Activated CD8-positive, alpha-beta T cell treated with anti-CD3 and anti-CD28 coated beads for 36 hours (primary cell): ENCODE measurements at regions of chr3 and their contacts with region 1.

Region 1: GRCh38 chr3:127544192-127544802 is 46.2 kb downstream of the TPRA1 start:
- DNase-seq: peak; percentile 83
- ATAC-seq: peak; percentile 45
- H3K4me3 Mint-ChIP-seq: no peak overlapping the region
- H3K27ac Mint-ChIP-seq: no peak overlapping the region
- H3K4me1 Mint-ChIP-seq: peaks cover 5% of the 10 kb centered on the region
- H3K27me3 Mint-ChIP-seq: no peaks in the 10 kb centered on the region
- CTCF ChIP-seq: peak; percentile 81

Region 2: DNA sequence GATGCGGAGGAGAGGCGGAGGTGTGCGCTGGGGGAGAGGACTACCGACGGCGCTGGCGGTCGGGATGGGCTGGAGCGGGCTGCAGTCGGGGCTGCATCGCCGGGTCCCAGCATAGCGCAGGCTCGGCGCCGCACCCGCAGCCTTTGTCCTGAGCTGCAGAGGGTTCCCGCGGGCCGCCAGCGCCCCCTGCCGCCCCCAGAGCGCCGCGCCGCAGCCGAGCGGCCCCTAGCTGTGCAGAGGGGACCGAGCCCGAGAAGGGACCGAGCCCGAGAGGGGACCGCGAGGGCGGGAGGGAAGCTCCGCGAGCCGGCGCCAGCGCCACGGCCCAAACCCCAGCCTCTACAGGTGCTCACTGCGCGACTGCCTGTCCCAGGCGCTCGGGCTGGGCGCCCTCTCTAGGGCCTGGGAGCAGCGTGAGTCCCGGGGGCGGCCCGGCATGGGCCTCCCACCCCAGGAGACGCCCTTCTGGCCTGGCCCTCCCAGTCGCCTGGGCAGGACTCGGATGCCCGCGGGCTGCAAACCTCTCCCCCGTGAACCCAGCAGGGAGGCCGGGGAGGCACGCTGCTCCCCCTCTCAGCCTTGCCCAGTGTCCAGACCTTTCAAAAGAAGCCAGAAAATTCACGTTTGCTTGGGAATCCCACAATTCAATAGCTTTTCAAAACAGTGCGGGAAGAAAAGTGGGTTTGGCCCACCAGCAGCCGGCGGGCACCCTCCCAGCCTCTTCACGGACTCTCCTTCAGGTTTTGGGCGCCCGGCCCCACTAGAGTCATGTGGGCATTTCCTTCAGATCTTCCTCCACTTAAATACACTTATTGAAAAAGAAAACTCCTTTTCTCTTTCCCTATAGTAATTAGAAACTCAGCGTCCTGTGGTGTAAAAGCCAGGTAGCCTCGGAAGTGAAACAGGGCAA is 88.5 kb before region 1 on chr3:
- CTCF ChIA-PET with region 1: interaction called, 12 read pairs
- POLR2A ChIA-PET with region 1: no interaction called
- intact Hi-C with region 1: no loop called
- DNase-seq: peak; percentile 76
- ATAC-seq: peak; percentile 96
- H3K4me3 Mint-ChIP-seq: no peak overlapping the region
- H3K27ac Mint-ChIP-seq: no peak overlapping the region
- H3K4me1 Mint-ChIP-seq: peaks cover 10% of the 10 kb centered on the region
- H3K27me3 Mint-ChIP-seq: peaks cover 46% of the 10 kb centered on the region
- CTCF ChIP-seq: peak; percentile 96

Region 3: DNA sequence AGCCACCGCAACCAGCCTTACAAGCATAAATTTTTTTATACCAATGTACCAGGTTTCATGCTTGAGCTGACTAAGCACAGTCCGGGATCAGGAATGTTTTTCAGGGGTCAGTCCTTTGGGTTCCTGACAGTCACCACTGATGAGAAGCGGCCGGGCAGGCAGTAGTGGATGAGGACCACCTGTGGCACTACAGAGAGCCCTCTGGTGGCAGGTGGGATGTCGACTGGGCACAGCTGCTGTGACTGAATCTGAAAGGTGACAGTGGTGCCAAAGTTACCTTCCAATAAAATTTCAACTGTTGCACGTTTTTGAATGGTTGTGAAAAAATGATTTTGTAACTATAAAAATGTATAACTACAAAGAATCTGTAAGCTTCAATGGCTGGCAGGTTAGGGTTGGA is 12.3 kb after region 1 on chr3:
- CTCF ChIA-PET with region 1: interaction called, 12 read pairs
- POLR2A ChIA-PET with region 1: no interaction called
- intact Hi-C with region 1: no loop called
- DNase-seq: no peak
- ATAC-seq: no peak
- H3K4me3 Mint-ChIP-seq: no peak overlapping the region
- H3K27ac Mint-ChIP-seq: no peak overlapping the region
- H3K4me1 Mint-ChIP-seq: peaks cover 5% of the 10 kb centered on the region
- H3K27me3 Mint-ChIP-seq: peaks cover 10% of the 10 kb centered on the region
- CTCF ChIP-seq: no peak

Region 4: GRCh38 chr3:127857333-127857732 is 313.0 kb after region 1 on chr3:
- CTCF ChIA-PET with region 1: no interaction called
- POLR2A ChIA-PET with region 1: no interaction called
- intact Hi-C with region 1: no loop called
- DNase-seq: no peak
- ATAC-seq: no peak
- H3K4me3 Mint-ChIP-seq: no peak overlapping the region
- H3K27ac Mint-ChIP-seq: no peak overlapping the region
- H3K4me1 Mint-ChIP-seq: peaks cover 3% of the 10 kb centered on the region
- H3K27me3 Mint-ChIP-seq: no peaks in the 10 kb centered on the region
- CTCF ChIP-seq: no peak